Naive thymus-derived CD8-positive, alpha-beta T cell (primary cell): ENCODE measurements at regions of chr22 and their contacts with region 1.

Region 1: DNA sequence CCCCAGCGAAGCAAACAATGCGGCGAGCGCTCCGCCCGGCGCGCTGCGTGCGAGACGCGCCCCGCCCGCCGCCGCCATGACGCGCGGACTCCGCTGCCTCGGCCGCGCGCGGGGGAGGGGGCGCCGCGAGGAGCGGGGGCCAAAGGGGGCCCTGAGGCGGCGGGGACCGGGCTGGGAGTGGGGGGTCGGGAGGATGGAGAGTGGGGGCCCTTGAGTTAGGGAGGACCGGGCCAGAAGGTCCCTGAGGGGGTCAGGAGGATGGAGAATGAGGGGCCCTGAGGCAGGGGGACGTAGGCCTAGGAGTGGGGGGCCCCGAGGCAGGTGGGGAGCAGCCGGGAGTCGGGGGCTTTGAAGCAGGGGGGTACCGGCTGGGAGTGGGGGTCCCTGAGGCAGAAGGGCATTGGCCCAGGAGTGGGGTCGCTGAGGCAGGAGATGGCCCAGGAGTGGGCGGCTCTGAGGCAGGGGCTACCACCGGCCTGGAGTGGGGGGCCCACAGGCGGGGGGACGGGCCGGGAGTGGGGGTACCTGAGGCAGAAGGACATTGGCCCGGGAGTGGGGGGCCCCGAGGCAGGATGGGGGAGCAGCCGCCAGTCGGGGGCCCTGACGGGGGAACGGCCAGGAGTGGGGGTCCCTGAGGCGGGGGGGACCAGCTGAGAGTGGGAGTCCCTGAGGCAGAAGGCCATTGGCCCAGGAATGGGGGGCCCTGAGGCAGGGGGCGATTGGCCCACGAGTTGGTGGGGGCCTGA is at the start of gene BRD1:
- DNase-seq: peak in 9 of 10 donors; percentile 20 to 58 (median 51)
- ATAC-seq: peak; percentile 51 to 66
- H3K4me3 Mint-ChIP-seq: peak within 1 kb of the TSS; percentile 86 to 96 (median 93)
- H3K27ac Mint-ChIP-seq: peak within 1 kb of the TSS; percentile 80 to 97 (median 96)
- H3K4me1 Mint-ChIP-seq: peaks cover 26 to 44% (median 42%) of the 10 kb centered on the region in 4 donors
- H3K27me3 Mint-ChIP-seq: no peaks in the 10 kb centered on the region
- polyA plus RNA-seq, gene BRD1: 1.9 to 3.7 (median 2.2) TPM

Region 2: DNA sequence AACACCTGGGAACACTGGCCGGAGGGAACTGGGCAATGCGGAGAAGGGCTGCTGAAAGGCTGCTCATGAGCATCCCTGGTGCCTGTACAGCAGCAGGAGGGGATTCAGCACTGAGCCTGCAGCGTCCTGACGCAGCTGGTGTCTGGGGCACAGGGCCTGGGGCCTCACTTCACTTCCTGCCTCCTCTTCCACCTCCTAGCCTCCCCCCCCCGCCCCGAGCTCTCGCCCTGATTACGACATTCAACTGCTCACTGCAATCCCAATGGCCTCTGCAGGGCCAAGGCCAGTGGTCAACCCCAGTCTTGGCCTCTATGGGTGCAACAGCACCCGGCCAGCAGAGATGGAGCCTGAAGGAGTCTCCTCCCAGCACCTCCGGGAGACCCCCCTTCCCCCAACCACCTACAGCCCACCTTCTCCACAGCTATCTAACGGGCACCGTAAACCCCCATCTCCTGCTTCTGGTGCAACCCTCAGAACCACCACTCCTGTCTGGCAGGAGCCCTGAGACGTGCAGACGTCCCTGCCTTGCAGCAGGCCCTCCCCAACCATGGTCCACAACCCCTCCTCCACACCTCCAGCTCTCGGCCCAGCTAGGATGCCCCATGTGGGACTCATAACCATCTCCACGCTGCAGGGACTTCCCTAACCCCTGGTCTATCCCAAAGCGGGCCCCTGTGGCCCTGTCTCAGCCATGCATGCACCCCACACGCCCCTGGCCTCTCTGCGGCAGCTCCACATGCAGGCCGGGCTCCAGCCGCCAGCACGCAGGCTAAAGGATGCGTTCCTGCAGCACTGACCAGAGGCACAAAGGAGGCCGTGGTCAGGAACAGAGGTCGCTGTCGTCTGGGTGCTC is 38.5 kb before region 1 on chr22:
- POLR2A ChIA-PET with region 1: interaction called, 14 read pairs
- DNase-seq: peak; percentile 20 to 67 (median 47)
- ATAC-seq: peak; percentile 86 to 93
- H3K4me3 Mint-ChIP-seq: peak overlapping the region; percentile 66 to 86 (median 80)
- H3K27ac Mint-ChIP-seq: peak overlapping the region; percentile 72 to 96 (median 92)
- H3K4me1 Mint-ChIP-seq: peaks cover 25 to 63% (median 45%) of the 10 kb centered on the region in 4 donors
- H3K27me3 Mint-ChIP-seq: no peaks in the 10 kb centered on the region

Region 3: GRCh38 chr22:49838771-49839717 is 11.0 kb after region 1 on chr22:
- POLR2A ChIA-PET with region 1: interaction called, 18 read pairs
- DNase-seq: peak; percentile 67 to 94 (median 92)
- ATAC-seq: peak; percentile 93 to 97
- H3K4me3 Mint-ChIP-seq: peak overlapping the region; percentile 76 to 87 (median 82)
- H3K27ac Mint-ChIP-seq: peak overlapping the region; percentile 88 to 99 (median 94)
- H3K4me1 Mint-ChIP-seq: peaks cover 16 to 31% (median 26%) of the 10 kb centered on the region in 4 donors
- H3K27me3 Mint-ChIP-seq: no peaks in the 10 kb centered on the region